CD4-positive, alpha-beta T cell (primary cell): ENCODE measurements at regions of chr6 and their contacts with region 1.

Region 1: GRCh38 chr6:79246891-79247290 is 12.4 kb upstream of the HMGN3 start:
- DNase-seq: no peak
- ATAC-seq: no peak
- H3K4me3 ChIP-seq: no peak overlapping the region
- H3K4me3 Mint-ChIP-seq: no peak overlapping the region
- H3K27ac ChIP-seq: no peak overlapping the region
- H3K27ac Mint-ChIP-seq: no peak overlapping the region
- H3K4me1 ChIP-seq: no peaks in the 10 kb centered on the region
- H3K4me1 Mint-ChIP-seq: no peaks in the 10 kb centered on the region
- H3K27me3 ChIP-seq: no peaks in the 10 kb centered on the region
- H3K27me3 Mint-ChIP-seq: peaks cover 4% of the 10 kb centered on the region
- CTCF ChIP-seq: no peak

Region 2: GRCh38 chr6:79536954-79537747 is 290.3 kb after region 1 on chr6 and contains the start of gene LCA5:
- CTCF ChIA-PET with region 1: no interaction called
- POLR2A ChIA-PET with region 1: no interaction called
- intact Hi-C with region 1: loop called in 1 of 2 experiments (anchors 10 kb)
- DNase-seq: peak; percentile 60 to 91 (median 76)
- ATAC-seq: peak; percentile 96
- H3K4me3 ChIP-seq: peak within 1 kb of the TSS; percentile 74
- H3K4me3 Mint-ChIP-seq: no peak within 1 kb of the TSS
- H3K27ac ChIP-seq: no peak within 1 kb of the TSS
- H3K27ac Mint-ChIP-seq: no peak within 1 kb of the TSS
- H3K4me1 ChIP-seq: peaks cover 16% of the 10 kb centered on the region
- H3K4me1 Mint-ChIP-seq: no peaks in the 10 kb centered on the region
- H3K27me3 ChIP-seq: peaks cover 0 to 17% of the 10 kb centered on the region in 2 experiments
- H3K27me3 Mint-ChIP-seq: peaks cover 10% of the 10 kb centered on the region
- CTCF ChIP-seq: no peak
- total RNA-seq, gene LCA5: not detected